ENCODE measurements at regions of chr12 and their contacts with region 1.

Region 1: GRCh38 chr12:55829967-55830600 is 697 bp upstream of the DNAJC14 start:
- DNase-seq: no peak
- ATAC-seq: peak; percentile 63
- H3K4me3 ChIP-seq: peak overlapping the region; percentile 76 to 87 (median 79)
- H3K27ac ChIP-seq: peak overlapping the region; percentile 93
- H3K4me1 ChIP-seq: peaks cover 46% of the 10 kb centered on the region
- H3K27me3 ChIP-seq: no peaks in the 10 kb centered on the region; a peak in 1 of 5 replicates
- CTCF ChIP-seq: no peak
- EP300 ChIP-seq: no peak
- POLR2A ChIP-seq: peak; percentile 32 to 52; a peak in 2 of 4 replicates
- RAD21 ChIP-seq: no peak

Region 2: DNA sequence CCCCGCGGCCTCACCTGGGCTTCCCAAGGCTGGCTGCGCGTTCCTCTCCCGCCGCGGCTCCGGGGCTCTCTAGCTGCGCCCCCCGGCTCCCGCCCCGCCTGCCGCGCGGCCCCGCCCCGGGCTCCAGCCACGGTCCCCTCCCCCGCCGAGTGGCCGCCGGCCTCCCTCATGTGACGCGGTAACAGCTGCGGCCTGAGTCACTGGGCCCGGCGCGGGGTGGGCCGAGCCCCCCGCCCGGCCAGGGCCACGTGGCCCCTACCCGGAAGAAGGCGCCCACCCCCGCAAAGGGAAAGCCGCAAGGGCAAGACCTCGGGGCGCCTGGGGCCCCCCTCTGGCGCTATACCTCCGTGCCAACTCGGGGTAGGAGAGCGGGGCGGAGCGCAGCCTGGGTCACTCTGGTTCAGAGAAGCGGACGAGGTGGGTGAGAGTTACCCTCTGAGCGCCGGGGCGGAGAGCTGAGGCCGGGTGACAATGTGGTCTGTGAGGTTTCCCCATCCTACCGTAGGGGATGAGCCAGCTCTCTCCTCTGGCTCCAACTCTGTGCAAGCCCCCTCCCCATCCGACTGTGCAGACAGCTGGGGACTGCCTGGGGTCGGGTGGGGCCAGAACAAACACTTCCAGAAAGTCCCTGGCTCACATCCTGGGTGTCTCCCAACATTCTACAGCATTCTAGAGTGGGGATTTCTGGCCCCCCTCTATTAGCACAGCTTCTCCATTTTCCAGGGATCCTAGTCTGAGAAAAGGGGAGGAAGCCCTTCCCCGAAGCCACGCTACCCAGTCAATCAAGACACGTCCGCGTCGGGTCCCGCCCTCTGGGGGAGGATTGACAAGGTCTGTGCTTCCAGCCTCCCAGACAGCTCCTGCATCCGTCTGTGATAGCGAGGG is 100.9 kb before region 1 on chr12 and contains the start of gene CD63:
- CTCF ChIA-PET with region 1: no interaction called
- POLR2A ChIA-PET with region 1: interaction called, 16 read pairs
- in situ Hi-C with region 1: no loop called
- intact Hi-C with region 1: no loop called
- DNase-seq: peak; percentile 73
- ATAC-seq: peak; percentile 81
- H3K4me3 ChIP-seq: peak within 1 kb of the TSS; percentile 84 to 89 (median 84)
- H3K27ac ChIP-seq: peak within 1 kb of the TSS; percentile 79
- H3K4me1 ChIP-seq: peaks cover 38% of the 10 kb centered on the region
- H3K27me3 ChIP-seq: no peaks in the 10 kb centered on the region; a peak in 1 of 5 replicates
- CTCF ChIP-seq: peak; percentile 17; the same call in 1 of the 2 replicates
- EP300 ChIP-seq: 0 out of 4 replicates have a peak, but pooled peaks of 1 of the 2 experiments have one; percentile 12
- POLR2A ChIP-seq: peak; percentile 41 to 69; a peak in 2 of 4 replicates
- RAD21 ChIP-seq: no peak
- total RNA-seq, gene CD63: 134 and 277 TPM in 2 replicates

Region 3: DNA sequence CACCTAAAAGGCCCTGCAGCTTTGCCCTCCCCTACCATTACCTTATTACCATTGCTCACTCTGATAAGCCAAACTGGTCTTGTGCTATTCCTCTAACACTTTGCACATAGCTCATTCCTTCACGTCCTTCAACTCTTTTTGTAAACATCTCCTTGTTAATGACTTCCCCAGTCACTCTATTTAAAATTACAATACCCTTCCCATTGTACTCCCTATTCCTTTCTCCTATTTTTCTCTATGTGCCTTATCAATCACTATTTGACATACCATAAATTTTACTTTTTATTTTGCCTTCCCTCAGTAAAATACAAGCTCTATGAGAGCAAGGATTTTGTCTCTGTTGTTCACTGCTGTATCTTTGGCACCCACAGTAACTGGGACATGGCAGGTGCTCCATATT is 18.0 kb before region 1 on chr12:
- CTCF ChIA-PET with region 1: no interaction called
- POLR2A ChIA-PET with region 1: interaction called, 206 read pairs
- in situ Hi-C with region 1: no loop called
- intact Hi-C with region 1: no loop called
- DNase-seq: no peak
- ATAC-seq: no peak
- H3K4me3 ChIP-seq: no peak overlapping the region
- H3K27ac ChIP-seq: no peak overlapping the region
- H3K4me1 ChIP-seq: peaks cover 46% of the 10 kb centered on the region
- H3K27me3 ChIP-seq: no peaks in the 10 kb centered on the region; a peak in 1 of 5 replicates
- CTCF ChIP-seq: no peak
- EP300 ChIP-seq: no peak
- POLR2A ChIP-seq: no peak
- RAD21 ChIP-seq: no peak

Region 4: DNA sequence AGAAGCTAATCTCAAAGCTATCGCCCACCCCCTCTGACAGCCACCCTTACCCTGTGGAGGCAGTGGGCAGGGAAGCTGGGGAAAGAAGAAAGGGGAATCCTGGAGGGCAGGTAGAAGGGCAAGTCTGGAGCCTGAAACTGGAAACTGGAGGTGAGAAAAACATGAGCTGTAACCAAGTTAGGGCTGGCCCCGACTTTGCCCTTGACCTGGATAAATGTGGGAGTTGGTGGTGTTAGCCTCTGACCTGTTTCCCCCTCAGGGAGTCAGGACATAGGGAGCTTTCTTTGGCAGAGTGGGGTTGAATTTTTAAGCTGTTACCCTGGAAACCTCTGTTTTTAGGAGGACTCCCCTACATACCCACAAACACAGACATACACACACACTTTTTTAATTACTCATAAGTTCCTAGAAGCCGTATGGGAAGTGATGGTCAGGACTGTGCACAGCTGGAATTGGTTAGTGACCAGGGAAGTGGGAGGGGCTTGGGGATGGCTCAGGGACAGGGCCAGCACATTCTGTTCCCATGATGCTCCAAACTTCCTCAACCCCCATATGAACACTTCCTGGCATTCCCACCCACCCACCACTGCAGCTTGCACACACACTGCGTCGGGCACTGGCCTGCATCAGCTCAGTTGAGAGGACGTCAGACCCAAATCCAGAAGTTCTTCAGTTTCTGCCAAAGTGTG is 17.7 kb after region 1 on chr12:
- CTCF ChIA-PET with region 1: no interaction called
- POLR2A ChIA-PET with region 1: interaction called, 22 read pairs
- in situ Hi-C with region 1: no loop called
- intact Hi-C with region 1: no loop called
- DNase-seq: peak; percentile 26
- ATAC-seq: peak; percentile 72
- H3K4me3 ChIP-seq: no peak overlapping the region
- H3K27ac ChIP-seq: no peak overlapping the region
- H3K4me1 ChIP-seq: peaks cover 26% of the 10 kb centered on the region
- H3K27me3 ChIP-seq: peaks cover 1 to 15% of the 10 kb centered on the region in 2 experiments; a peak in 3 of 5 replicates
- CTCF ChIP-seq: no peak
- EP300 ChIP-seq: no peak
- POLR2A ChIP-seq: no peak
- RAD21 ChIP-seq: no peak

Region 5: DNA sequence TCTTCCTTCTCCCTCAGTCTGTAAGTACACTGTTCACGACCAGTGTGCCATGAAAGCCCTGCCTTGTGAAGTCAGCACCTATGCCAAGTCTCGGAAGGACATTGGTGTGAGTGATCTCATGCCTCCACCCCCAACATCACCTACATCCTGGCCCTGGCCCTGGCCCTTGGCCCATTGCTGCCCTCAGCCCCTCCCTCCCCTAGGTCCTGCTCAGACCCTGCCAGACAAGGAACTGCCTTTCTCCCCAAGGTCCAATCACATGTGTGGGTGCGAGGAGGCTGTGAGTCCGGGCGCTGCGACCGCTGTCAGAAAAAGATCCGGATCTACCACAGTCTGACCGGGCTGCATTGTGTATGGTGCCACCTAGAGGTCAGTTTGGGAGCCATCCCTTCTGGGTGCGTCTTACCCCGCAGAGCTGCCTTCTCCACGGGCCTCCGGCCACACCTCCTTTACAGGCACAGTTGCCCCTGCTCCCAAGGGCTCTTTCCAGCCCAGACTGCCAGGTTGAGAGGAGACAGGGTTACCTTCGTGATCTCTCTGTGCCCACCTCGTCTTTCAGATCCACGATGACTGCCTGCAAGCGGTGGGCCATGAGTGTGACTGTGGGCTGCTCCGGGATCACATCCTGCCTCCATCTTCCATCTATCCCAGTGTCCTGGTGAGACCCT is 110.1 kb after region 1 on chr12:
- CTCF ChIA-PET with region 1: no interaction called
- POLR2A ChIA-PET with region 1: interaction called, 12 read pairs
- in situ Hi-C with region 1: no loop called
- intact Hi-C with region 1: no loop called
- DNase-seq: peak; percentile 69
- ATAC-seq: peak; percentile 97
- H3K4me3 ChIP-seq: peak overlapping the region in 1 of 3 experiments; percentile 45; a peak in 2 of 6 replicates
- H3K27ac ChIP-seq: no peak overlapping the region
- H3K4me1 ChIP-seq: peaks cover 11% of the 10 kb centered on the region
- H3K27me3 ChIP-seq: no peaks in the 10 kb centered on the region
- CTCF ChIP-seq: peak; percentile 98
- EP300 ChIP-seq: no peak
- POLR2A ChIP-seq: no peak
- RAD21 ChIP-seq: peak; percentile 86

Region 6: DNA sequence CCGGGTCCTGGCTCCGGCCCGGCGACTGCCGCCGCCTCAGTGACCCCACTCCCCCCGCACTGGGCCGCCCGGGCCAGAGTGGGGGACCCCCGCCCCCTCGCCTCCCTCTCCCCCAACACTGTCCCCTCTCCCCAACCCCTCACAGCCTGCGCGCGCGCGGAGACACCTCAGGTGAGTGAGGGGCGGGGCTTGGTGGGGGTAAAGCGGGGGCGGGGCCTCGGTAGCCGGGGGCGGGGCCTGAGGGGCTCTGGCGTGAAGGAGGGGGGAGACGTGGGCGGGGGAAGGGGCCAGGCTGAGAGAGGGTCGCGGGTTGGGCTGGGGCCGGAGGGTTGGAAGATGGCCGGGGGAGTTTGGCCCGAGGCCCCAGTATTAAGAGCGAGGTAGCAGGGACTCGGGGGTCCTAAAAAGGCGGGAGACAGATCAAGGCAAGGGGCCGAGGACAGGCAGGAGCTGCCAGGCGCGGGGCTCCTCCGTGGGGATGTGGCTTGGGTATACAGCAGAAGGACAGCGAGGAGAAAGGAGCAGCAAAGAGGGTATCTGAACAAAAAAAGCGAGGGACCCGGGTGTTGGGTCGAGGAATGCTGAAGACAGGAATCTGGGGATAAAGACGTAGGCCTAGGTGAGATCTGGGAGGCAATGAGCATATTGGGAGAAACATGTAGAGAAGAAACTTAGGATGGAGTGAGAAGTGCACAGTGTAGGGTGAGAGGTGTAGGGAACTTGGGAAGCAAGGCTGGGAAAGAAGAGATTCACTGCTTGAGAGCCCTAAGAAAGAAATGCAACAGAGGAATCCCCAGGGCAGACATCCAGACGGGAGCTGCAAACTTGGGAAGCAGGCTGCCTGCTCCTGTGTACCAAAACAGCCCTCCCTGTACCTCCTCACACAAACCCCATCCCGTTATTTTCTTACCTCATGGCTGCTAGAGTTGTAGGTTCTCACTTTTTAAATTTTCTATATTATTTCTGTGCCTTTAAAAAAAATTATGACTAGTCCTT is 177.8 kb after region 1 on chr12:
- CTCF ChIA-PET with region 1: no interaction called
- POLR2A ChIA-PET with region 1: interaction called, 10 read pairs
- in situ Hi-C with region 1: no loop called
- intact Hi-C with region 1: no loop called
- DNase-seq: no peak
- ATAC-seq: peak; percentile 33
- H3K4me3 ChIP-seq: peak overlapping the region; percentile 59 to 84 (median 69)
- H3K27ac ChIP-seq: peak overlapping the region; percentile 73
- H3K4me1 ChIP-seq: peaks cover 75% of the 10 kb centered on the region
- H3K27me3 ChIP-seq: no peaks in the 10 kb centered on the region; a peak in 1 of 5 replicates
- CTCF ChIP-seq: no peak
- EP300 ChIP-seq: no peak
- POLR2A ChIP-seq: no peak; a peak in 1 of 4 replicates
- RAD21 ChIP-seq: no peak

Region 7: DNA sequence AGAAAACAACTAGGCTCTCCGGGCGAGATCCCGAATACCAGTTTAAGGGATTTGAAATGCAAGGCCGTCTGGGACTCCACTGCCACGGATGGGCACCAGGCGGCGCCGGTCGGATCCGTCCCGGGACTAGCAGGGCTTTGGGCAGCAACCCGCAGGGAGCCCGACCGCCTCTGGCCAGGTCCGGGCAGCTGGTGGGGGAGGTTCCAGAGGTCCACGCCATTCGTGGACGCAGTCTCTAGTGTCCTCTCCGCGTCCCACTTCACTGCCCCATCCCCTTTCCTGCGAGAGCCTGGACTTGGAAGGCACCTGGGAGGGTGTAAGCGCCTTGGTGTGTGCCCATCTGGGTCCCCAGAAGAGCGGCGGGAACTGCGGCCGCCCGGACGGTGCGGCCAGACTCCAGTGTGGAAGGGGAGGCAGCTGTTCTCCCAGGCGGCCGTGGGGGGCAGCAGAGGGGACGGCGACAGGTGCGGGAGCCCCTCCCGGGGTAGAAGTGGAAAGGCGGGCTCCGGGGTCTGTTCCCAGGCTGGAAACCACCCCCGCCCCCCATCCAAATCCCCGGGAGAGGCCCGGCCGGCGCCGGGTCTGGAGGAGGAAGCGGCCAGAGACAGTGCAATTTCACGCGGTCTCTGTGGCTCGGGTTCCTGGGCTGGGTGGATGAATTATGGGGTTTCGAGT is 249.0 kb after region 1 on chr12:
- CTCF ChIA-PET with region 1: no interaction called
- POLR2A ChIA-PET with region 1: interaction called, 10 read pairs
- in situ Hi-C with region 1: no loop called
- intact Hi-C with region 1: no loop called
- DNase-seq: peak; percentile 81
- ATAC-seq: peak; percentile 61
- H3K4me3 ChIP-seq: peak overlapping the region; percentile 89 to 96 (median 91)
- H3K27ac ChIP-seq: peak overlapping the region; percentile 99
- H3K4me1 ChIP-seq: peaks cover 49% of the 10 kb centered on the region
- H3K27me3 ChIP-seq: no peaks in the 10 kb centered on the region; a peak in 1 of 5 replicates
- CTCF ChIP-seq: peak; percentile 83
- EP300 ChIP-seq: 0 out of 4 replicates have a peak, but pooled peaks of 1 of the 2 experiments have one; percentile 22
- POLR2A ChIP-seq: peak; percentile 67 to 73; a peak in 3 of 4 replicates
- RAD21 ChIP-seq: peak; percentile 80

Region 8: DNA sequence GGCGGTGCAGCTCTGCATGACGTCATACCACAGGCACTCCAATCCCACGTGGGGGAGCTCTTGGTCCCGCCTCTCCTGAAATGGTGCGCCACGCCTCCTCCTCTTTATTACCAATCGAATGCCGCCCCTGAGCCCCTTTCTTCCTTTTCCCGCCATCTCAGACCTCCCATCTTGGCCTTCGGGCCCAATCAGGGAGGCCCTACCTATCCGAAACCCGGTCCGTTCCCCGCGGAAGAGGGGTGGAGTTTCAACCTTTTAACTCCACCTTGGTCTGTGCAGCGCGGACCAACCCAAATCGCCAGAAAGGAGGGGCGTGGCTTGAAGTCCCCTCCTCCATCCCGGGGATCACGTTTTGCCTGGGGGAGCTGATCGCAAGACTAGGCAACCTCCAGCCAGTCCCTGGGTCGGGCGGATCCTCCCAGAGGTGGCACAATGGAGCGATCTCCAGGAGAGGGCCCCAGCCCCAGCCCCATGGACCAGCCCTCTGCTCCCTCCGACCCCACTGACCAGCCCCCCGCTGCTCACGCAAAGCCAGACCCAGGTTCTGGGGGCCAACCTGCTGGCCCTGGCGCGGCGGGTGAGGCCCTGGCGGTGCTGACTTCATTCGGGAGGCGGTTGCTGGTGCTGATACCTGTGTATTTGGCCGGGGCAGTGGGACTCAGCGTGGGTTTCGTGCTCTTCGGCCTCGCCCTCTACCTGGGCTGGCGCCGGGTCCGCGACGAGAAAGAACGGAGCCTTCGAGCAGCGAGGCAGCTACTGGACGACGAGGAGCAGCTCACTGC is 298.0 kb after region 1 on chr12 and contains the start of gene ESYT1:
- CTCF ChIA-PET with region 1: no interaction called
- POLR2A ChIA-PET with region 1: no interaction called
- in situ Hi-C with region 1: no loop called
- intact Hi-C with region 1: no loop called
- DNase-seq: peak; percentile 100
- ATAC-seq: peak; percentile 90
- H3K4me3 ChIP-seq: peak within 1 kb of the TSS; percentile 72 to 89 (median 83)
- H3K27ac ChIP-seq: peak within 1 kb of the TSS; percentile 65
- H3K4me1 ChIP-seq: peaks cover 61% of the 10 kb centered on the region
- H3K27me3 ChIP-seq: no peaks in the 10 kb centered on the region
- CTCF ChIP-seq: peak; percentile 42
- EP300 ChIP-seq: no peak
- POLR2A ChIP-seq: peak; percentile 90 to 96
- RAD21 ChIP-seq: 0 out of 2 replicates have a peak, but pooled peaks have one; percentile 11
- total RNA-seq, gene ESYT1: 30.1 and 66.9 TPM in 2 replicates

Measured in HepG2 (cell line).